ENCODE measurements at regions of chr17 and their contacts with region 1.

Region 1: GRCh38 chr17:51153210-51154072 is at the start of gene NME1:
- DNase-seq: peak; percentile 98
- ATAC-seq: peak; percentile 94 to 98 (median 94)
- H3K4me3 ChIP-seq: peak within 1 kb of the TSS; percentile 69
- H3K4me3 Mint-ChIP-seq: no peak within 1 kb of the TSS
- H3K27ac ChIP-seq: peak within 1 kb of the TSS; percentile 86
- H3K27ac Mint-ChIP-seq: no peak within 1 kb of the TSS
- H3K4me1 ChIP-seq: peaks cover 14% of the 10 kb centered on the region
- H3K4me1 Mint-ChIP-seq: no peaks in the 10 kb centered on the region
- H3K27me3 ChIP-seq: no peaks in the 10 kb centered on the region
- H3K27me3 Mint-ChIP-seq: no peaks in the 10 kb centered on the region
- CTCF ChIP-seq: peak; percentile 68
- total RNA-seq, gene NME1: 14.7 to 17.8 (median 15.0) TPM

Region 2: DNA sequence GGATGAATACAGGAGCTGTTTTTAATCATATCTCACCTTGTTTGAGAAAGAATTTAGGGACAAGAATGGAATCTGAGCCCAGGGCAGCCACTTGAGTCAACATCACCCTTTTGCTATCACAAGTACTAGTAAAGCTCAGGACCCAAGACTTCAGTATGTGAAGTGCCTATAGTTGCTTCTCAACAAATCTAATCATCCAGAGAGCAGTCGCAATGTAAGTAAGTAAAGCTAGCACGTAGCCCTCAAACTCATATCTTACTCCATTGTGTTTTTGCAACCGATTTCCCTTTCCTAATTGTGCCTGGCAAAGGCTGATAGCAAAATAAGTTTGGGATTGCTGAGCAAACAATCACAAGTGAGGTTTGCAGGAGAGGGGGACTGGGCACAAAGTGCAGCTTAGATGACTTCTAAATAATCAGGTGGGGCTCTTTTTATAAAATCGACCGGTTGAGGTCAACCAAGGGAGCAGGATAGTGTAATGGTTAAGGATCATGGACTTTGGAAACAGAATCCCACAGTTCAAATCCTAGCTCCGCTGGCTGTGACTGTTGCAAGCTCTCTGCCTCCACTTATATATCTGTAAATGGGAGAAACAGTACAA is 300.3 kb before region 1 on chr17:
- intact Hi-C with region 1: loop called (anchors 5 kb)
- DNase-seq: no peak
- ATAC-seq: no peak
- H3K4me3 ChIP-seq: no peak overlapping the region
- H3K4me3 Mint-ChIP-seq: peak overlapping the region; percentile 84
- H3K27ac ChIP-seq: no peak overlapping the region
- H3K27ac Mint-ChIP-seq: peak overlapping the region; percentile 77 to 87
- H3K4me1 ChIP-seq: peaks cover 11% of the 10 kb centered on the region
- H3K4me1 Mint-ChIP-seq: peaks cover 15 to 16% of the 10 kb centered on the region in 2 donors
- H3K27me3 ChIP-seq: no peaks in the 10 kb centered on the region
- H3K27me3 Mint-ChIP-seq: peaks cover 6 to 20% of the 10 kb centered on the region in 2 donors
- CTCF ChIP-seq: no peak

Region 3: DNA sequence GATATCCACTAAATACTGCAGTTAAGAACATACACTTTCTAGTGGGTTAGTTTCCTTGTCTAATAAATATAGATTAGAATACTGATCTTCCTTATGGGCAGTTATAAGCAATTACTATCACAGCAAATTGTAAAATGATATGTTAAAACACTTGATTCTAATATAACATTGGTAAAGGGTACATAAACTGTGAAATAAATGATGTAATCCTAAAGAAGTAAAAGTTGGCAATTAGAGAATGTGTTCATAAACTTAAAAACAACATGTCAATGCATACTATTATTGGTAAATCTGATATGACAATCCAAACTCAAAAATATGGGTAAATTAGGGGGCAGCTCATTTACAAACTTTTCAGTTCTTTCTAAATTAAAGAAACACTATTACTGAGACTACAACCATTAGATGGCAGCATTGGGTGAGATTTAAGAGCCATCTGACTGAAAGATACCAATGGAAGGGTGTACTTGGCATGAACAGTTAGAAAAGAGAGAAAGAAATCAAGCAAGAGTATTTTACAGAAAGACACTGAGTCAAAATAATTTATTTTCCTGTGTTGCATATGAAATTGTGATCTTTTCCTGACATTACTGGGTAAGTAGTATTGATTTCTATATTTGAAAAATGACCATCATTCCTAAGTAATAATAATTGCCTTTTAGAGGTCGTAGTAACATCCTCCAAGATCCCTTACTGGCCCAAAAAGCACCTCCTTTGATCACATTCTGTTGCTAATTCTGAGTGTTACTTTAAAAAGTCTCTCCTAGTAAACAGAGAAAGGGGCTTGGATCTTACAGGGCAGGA is 152.4 kb before region 1 on chr17:
- intact Hi-C with region 1: loop called (anchors 1 kb)
- DNase-seq: peak in 1 of 2 donors; percentile 83
- ATAC-seq: peak; percentile 76 to 90 (median 79)
- H3K4me3 ChIP-seq: no peak overlapping the region
- H3K4me3 Mint-ChIP-seq: no peak overlapping the region
- H3K27ac ChIP-seq: no peak overlapping the region
- H3K27ac Mint-ChIP-seq: peak overlapping the region in 1 of 2 donors; percentile 16
- H3K4me1 ChIP-seq: no peaks in the 10 kb centered on the region
- H3K4me1 Mint-ChIP-seq: peaks cover 0 to 6% of the 10 kb centered on the region in 2 donors
- H3K27me3 ChIP-seq: no peaks in the 10 kb centered on the region
- H3K27me3 Mint-ChIP-seq: no peaks in the 10 kb centered on the region
- CTCF ChIP-seq: peak; percentile 65

Region 4: GRCh38 chr17:51120739-51121617 is 32.5 kb before region 1 on chr17 and contains the start of gene SPAG9:
- intact Hi-C with region 1: loop called (anchors 1 kb)
- DNase-seq: peak; percentile 93 to 97
- ATAC-seq: peak; percentile 84 to 95 (median 89)
- H3K4me3 ChIP-seq: peak within 1 kb of the TSS; percentile 85
- H3K4me3 Mint-ChIP-seq: peak within 1 kb of the TSS; percentile 94
- H3K27ac ChIP-seq: peak within 1 kb of the TSS; percentile 93
- H3K27ac Mint-ChIP-seq: peak within 1 kb of the TSS; percentile 96 to 97
- H3K4me1 ChIP-seq: peaks cover 27% of the 10 kb centered on the region
- H3K4me1 Mint-ChIP-seq: peaks cover 42 to 51% of the 10 kb centered on the region in 2 donors
- H3K27me3 ChIP-seq: no peaks in the 10 kb centered on the region
- H3K27me3 Mint-ChIP-seq: no peaks in the 10 kb centered on the region
- CTCF ChIP-seq: no peak
- total RNA-seq, gene SPAG9: 78.1 to 91.7 (median 90.3) TPM

Measured in natural killer cell (primary cell).